Activated naive CD4-positive, alpha-beta T cell treated with anti-CD3 and anti-CD28 coated beads for 36 hours (primary cell): ENCODE measurements at regions of chr13 and their contacts with region 1.

Region 1: GRCh38 chr13:31431722-31432137 is 232.0 kb downstream of the B3GLCT start:
- DNase-seq: peak; percentile 68
- H3K4me3 Mint-ChIP-seq: no peak overlapping the region
- H3K27ac Mint-ChIP-seq: no peak overlapping the region
- H3K4me1 Mint-ChIP-seq: no peaks in the 10 kb centered on the region
- H3K27me3 Mint-ChIP-seq: peaks cover 4% of the 10 kb centered on the region

Region 2: DNA sequence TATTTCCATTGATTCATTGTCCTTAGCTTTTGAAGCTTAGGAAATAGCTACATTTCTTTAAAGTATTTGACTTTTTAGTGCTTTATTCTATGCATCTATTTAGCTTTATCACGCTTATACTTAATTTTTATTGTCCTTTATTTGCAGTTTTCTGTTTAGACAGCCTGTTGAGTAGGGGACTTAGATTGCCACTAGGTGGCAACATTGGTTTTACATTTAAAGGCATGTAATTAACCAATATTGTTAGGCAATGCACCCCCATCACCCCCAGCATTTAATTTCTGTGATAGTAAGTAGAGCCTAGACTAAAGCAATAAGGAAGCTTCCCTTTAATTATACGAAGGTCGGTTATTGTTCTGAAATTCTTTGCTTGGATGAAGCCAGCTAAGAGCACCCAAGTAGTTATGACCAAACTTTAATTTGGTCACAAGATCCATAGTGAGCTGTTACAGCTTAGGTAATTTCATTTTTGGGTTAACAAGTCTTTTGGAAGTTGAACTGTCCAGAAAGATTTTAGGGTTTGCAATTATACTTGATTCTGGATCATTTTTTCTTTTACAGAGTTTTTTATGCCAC is 195.4 kb before region 1 on chr13:
- CTCF ChIA-PET with region 1: interaction called, 54 read pairs
- intact Hi-C with region 1: no loop called
- DNase-seq: no peak
- H3K4me3 Mint-ChIP-seq: no peak overlapping the region
- H3K27ac Mint-ChIP-seq: no peak overlapping the region
- H3K4me1 Mint-ChIP-seq: no peaks in the 10 kb centered on the region
- H3K27me3 Mint-ChIP-seq: no peaks in the 10 kb centered on the region

Region 3: DNA sequence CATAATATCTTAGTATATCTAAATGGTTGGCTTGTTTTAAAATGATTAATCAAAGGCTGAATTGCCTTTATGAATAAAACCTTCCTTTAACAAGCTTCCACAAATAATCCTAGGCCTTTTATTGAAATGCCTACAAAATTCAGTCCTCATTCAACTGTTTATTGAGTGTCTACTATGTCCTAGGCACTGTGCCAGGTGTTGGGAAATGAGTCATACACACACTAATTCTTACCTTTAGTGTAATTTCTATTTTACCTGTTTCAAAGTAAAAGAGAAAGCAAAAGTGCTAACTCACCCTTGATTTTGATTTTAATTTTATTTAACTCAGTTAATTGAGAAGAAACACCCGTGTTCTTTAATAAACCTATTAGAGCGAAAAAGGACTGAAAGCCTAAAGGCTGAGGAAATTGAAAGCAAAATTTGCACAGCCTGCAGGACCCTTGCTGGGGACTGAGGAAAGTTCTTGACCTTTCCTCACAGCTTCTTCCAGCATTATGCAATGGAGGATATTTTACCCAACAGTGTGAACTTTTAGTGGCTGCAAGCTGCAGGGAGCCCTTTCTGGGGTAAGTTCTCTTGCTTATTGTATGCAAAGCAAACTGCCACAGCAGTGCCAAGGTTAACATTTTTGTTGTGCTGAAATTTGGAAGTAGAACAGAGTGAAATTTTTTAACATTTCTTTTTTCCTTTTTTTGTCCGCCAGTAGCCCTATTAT is 148.8 kb before region 1 on chr13:
- CTCF ChIA-PET with region 1: no interaction called
- intact Hi-C with region 1: no loop called
- DNase-seq: peak; percentile 9
- H3K4me3 Mint-ChIP-seq: no peak overlapping the region
- H3K27ac Mint-ChIP-seq: no peak overlapping the region
- H3K4me1 Mint-ChIP-seq: no peaks in the 10 kb centered on the region
- H3K27me3 Mint-ChIP-seq: no peaks in the 10 kb centered on the region

Region 4: GRCh38 chr13:31742097-31742734 is 310.5 kb after region 1 on chr13:
- CTCF ChIA-PET with region 1: interaction called, 15 read pairs
- intact Hi-C with region 1: loop called (anchors 1 kb)
- DNase-seq: peak; percentile 72
- H3K4me3 Mint-ChIP-seq: no peak overlapping the region
- H3K27ac Mint-ChIP-seq: no peak overlapping the region
- H3K4me1 Mint-ChIP-seq: peaks cover 2% of the 10 kb centered on the region
- H3K27me3 Mint-ChIP-seq: peaks cover 9% of the 10 kb centered on the region